Activated CD4-positive, alpha-beta memory T cell treated with anti-CD3 and anti-CD28 coated beads for 36 hours (primary cell): ENCODE measurements at regions of chr6 and their contacts with region 1.

Region 1: GRCh38 chr6:87078983-87079616 is 15.8 kb downstream of the CGA start:
- DNase-seq: peak; percentile 67
- H3K4me3 Mint-ChIP-seq: no peak overlapping the region
- H3K27ac Mint-ChIP-seq: no peak overlapping the region
- H3K4me1 Mint-ChIP-seq: no peaks in the 10 kb centered on the region
- H3K27me3 Mint-ChIP-seq: peaks cover 11% of the 10 kb centered on the region

Region 2: GRCh38 chr6:87059943-87060342 is 19.2 kb before region 1 on chr6:
- CTCF ChIA-PET with region 1: interaction called, 77 read pairs
- POLR2A ChIA-PET with region 1: no interaction called
- intact Hi-C with region 1: no loop called
- DNase-seq: no peak
- H3K4me3 Mint-ChIP-seq: no peak overlapping the region
- H3K27ac Mint-ChIP-seq: no peak overlapping the region
- H3K4me1 Mint-ChIP-seq: no peaks in the 10 kb centered on the region
- H3K27me3 Mint-ChIP-seq: peaks cover 11% of the 10 kb centered on the region

Region 3: GRCh38 chr6:87066449-87067333 is 12.4 kb before region 1 on chr6:
- CTCF ChIA-PET with region 1: interaction called, 77 read pairs
- POLR2A ChIA-PET with region 1: no interaction called
- intact Hi-C with region 1: no loop called
- DNase-seq: peak; percentile 51
- H3K4me3 Mint-ChIP-seq: no peak overlapping the region
- H3K27ac Mint-ChIP-seq: no peak overlapping the region
- H3K4me1 Mint-ChIP-seq: peaks cover 2% of the 10 kb centered on the region
- H3K27me3 Mint-ChIP-seq: peaks cover 2% of the 10 kb centered on the region

Region 4: DNA sequence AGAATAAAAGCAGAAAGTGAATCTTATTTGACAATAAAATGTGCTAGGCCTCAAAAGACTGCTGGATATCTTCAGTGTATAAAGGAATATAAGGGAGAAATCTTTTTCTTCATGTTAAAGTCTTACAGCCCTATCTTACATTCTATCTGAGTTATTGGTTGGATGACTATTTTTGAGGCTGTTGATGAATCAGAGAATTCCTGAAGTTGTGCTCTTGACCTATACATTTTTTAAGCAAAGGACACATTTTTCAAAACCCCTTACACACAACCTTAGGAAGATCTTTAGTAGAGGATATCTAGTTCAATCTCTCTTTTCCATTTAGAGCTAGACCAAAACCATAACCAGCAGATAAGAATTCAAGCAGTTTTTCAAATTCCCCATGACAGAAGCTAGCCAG is 26.7 kb after region 1 on chr6:
- CTCF ChIA-PET with region 1: interaction called, 10 read pairs
- POLR2A ChIA-PET with region 1: no interaction called
- intact Hi-C with region 1: no loop called
- DNase-seq: no peak
- H3K4me3 Mint-ChIP-seq: no peak overlapping the region
- H3K27ac Mint-ChIP-seq: no peak overlapping the region
- H3K4me1 Mint-ChIP-seq: no peaks in the 10 kb centered on the region
- H3K27me3 Mint-ChIP-seq: peaks cover 4% of the 10 kb centered on the region